Calu3 (cell line): ENCODE measurements at regions of chr19 and their contacts with region 1.

Region 1: DNA sequence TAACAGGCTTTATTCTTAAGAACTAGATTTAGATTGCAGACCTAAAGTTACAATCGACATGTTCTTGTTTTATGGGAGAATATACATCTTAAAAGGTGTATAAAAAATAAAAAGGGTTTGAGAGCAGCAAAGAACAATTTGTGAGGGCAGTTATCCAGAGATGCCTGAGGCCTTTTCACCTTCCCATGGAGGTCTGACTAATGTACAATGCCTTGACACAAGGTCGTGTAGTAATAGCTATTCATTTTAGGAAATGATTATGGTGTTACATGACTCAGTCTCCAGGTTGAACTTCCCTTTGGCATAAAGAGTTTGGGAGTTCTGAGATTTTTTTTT is 20.0 kb downstream of the CEACAM6 start:
- DNase-seq: peak; percentile 32
- H3K4me3 Mint-ChIP-seq: peak overlapping the region; percentile 50
- H3K27ac Mint-ChIP-seq: peak overlapping the region; percentile 99
- H3K4me1 Mint-ChIP-seq: peaks cover 91% of the 10 kb centered on the region
- H3K27me3 Mint-ChIP-seq: no peaks in the 10 kb centered on the region
- CTCF ChIP-seq: no peak

Region 2: DNA sequence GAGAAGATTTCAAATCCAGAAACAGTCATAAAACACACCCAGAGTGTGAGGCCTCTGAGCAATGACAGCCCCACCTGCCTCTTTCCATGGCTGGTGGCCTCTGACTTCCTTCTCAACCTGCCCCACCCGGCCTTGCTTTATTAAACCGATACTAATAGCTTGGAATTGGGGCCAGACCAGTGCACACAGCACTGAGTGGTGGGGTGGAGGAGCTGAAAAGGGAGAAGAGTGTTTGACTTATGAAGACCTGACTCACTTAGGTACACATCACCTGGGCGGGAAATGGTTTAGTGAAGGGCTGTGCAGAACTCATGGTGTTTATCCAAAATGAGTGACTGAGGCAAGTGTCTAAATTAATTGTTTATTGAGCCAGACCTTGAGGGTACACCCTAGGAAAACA is 40.7 kb before region 1 on chr19:
- CTCF ChIA-PET with region 1: interaction called, 10 read pairs
- intact Hi-C with region 1: no loop called
- DNase-seq: peak; percentile 25
- H3K4me3 Mint-ChIP-seq: no peak overlapping the region
- H3K27ac Mint-ChIP-seq: peak overlapping the region; percentile 25
- H3K4me1 Mint-ChIP-seq: peaks cover 31% of the 10 kb centered on the region
- H3K27me3 Mint-ChIP-seq: peaks cover 29% of the 10 kb centered on the region
- CTCF ChIP-seq: no peak

Region 3: DNA sequence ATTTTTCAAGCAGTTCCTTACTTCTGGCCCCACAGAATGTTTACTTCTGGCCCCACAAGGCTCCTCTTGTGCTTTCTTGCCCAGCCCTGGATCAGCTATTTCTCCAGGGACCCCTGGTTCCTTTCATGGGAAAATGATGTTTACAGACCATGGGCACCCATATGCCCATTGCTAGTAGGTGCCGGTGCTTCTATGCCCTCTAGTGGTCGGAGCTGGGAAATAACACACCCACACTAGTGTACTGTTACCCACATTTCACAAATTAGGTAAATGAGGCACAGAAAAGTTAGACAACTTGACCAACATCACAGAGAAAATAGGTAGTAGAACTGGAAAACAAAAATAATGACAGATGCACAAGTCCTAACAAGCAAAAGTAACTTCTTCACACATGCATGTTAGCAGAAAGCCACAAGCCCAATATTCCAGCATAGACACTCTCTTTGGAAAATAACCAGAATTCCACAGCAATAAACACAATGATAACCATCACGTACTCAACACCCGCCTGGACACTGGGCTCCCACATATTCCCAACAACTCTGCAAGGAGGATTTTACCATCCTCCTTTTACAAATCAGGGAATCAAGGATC is 21.3 kb before region 1 on chr19:
- CTCF ChIA-PET with region 1: interaction called, 66 read pairs
- intact Hi-C with region 1: no loop called
- DNase-seq: peak; percentile 76
- H3K4me3 Mint-ChIP-seq: no peak overlapping the region
- H3K27ac Mint-ChIP-seq: peak overlapping the region; percentile 19
- H3K4me1 Mint-ChIP-seq: peaks cover 71% of the 10 kb centered on the region
- H3K27me3 Mint-ChIP-seq: peaks cover 1% of the 10 kb centered on the region
- CTCF ChIP-seq: peak; percentile 56

Region 4: DNA sequence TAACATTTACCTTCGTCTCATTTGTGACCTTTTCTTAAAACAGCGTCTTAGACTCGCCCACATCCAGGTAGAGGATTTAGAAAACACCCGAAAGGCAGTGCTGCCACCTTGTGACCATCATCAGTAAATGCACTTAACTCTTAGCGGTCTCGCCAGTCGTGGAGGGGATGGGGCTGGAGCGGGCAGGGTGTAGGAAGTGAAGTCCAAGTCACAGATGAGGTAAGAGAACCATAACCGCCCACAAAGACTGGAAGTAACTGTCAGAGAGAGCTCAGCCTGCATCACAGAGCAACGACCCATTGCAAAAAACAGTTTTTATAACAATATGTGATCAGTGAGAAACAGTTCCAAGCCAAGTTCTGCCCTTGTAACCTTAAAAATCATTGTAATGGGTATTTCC is 10.3 kb after region 1 on chr19:
- CTCF ChIA-PET with region 1: interaction called, 10 read pairs
- intact Hi-C with region 1: no loop called
- DNase-seq: peak; percentile 84
- H3K4me3 Mint-ChIP-seq: no peak overlapping the region
- H3K27ac Mint-ChIP-seq: peak overlapping the region; percentile 4
- H3K4me1 Mint-ChIP-seq: peaks cover 29% of the 10 kb centered on the region
- H3K27me3 Mint-ChIP-seq: no peaks in the 10 kb centered on the region
- CTCF ChIP-seq: peak; percentile 93

Region 5: GRCh38 chr19:42023121-42023942 is 248.0 kb after region 1 on chr19:
- CTCF ChIA-PET with region 1: no interaction called
- intact Hi-C with region 1: no loop called
- DNase-seq: peak; percentile 54
- H3K4me3 Mint-ChIP-seq: no peak overlapping the region
- H3K27ac Mint-ChIP-seq: no peak overlapping the region
- H3K4me1 Mint-ChIP-seq: no peaks in the 10 kb centered on the region
- H3K27me3 Mint-ChIP-seq: peaks cover 97% of the 10 kb centered on the region
- CTCF ChIP-seq: peak; percentile 47

Region 6: DNA sequence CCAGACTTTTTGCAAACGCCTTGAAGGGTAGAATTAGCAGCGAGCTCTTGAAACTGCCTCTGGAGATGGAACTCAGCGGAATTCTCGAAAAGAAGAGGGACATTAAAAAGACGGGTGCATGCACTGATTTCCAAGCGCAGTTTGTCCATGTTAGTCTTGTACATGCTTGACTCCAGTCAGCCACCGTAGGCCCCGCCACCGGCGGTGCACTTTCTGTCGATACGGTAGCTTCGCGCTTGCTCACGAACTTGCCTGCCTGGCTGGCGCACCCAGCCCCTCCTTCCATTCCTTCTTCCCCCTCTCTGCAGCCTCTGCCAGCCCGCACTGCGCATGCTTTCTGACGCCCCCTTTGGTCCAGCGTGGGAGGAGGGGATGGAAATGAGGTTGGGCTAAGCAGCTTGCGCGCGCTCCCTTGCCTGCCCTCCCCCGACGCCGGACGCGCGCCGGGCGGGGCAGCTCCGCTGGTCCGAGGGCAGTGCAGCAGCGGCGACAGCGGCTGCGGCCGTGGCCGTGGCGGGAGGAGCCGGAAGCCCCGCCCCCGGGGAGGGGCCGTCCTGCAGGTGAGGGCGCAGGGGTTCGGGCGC is 1757.7 kb after region 1 on chr19 and contains the start of gene ZNF575:
- CTCF ChIA-PET with region 1: no interaction called
- intact Hi-C with region 1: no loop called
- DNase-seq: peak; percentile 96
- H3K4me3 Mint-ChIP-seq: peak within 1 kb of the TSS; percentile 79
- H3K27ac Mint-ChIP-seq: peak within 1 kb of the TSS; percentile 68
- H3K4me1 Mint-ChIP-seq: no peaks in the 10 kb centered on the region
- H3K27me3 Mint-ChIP-seq: no peaks in the 10 kb centered on the region
- CTCF ChIP-seq: no peak
- total RNA-seq, gene ZNF575: 2.2 and 2.8 TPM in 2 replicates